Activated CD4-positive, alpha-beta T cell treated with anti-CD3 and anti-CD28 coated beads for 36 hours (primary cell): ENCODE measurements at regions of chr17 and their contacts with region 1.

Region 1: DNA sequence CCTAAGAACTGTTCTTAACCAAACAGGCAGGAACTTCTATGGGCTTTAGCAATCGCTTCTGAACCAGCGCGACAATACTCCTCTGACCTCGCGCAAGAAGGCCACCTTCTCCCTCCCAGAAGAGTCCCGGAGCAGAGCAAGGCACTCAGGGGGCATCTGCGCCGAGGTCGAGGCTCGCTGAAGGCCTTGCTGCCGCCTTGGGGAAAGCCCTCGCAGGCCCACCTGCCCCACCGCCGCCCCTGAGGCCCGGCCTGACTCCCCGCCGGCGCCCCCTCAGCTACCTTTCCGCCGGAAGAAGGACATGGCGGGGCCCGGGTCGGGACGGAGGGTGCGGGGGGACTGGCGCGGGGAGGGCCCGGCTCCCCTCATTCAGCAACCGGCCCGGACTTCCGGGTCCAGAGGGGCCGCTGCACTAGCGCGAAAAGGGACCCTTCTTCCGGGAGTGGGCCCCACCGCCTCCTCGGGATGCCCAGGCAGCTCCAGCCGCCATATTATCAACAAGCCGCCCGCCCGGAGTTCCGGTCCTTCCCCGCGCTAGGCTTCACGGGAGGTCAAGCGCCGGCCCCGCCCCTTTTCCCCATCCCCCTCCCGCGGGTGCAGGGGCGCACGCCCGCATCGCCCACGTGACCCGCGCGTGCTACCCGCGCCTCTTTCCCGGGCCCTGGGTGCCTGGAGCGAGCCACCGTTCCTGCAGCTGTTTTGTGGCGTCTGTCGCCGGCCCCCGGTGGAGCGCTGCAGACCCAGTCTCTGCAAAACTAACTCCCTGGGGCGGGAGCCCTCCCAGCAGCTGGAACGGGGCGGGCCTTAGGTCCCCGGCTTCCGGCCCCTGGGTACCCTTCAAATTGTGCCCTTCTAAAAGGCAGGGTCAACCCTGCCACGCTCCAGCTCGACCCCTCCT is at the start of gene AKAP10:
- DNase-seq: peak; percentile 98
- ATAC-seq: peak; percentile 85
- H3K4me3 Mint-ChIP-seq: peak within 1 kb of the TSS; percentile 90
- H3K27ac Mint-ChIP-seq: peak within 1 kb of the TSS; percentile 98
- H3K4me1 Mint-ChIP-seq: peaks cover 48% of the 10 kb centered on the region
- H3K27me3 Mint-ChIP-seq: no peaks in the 10 kb centered on the region
- total RNA-seq, gene AKAP10: 31.6 to 35.9 TPM

Region 2: DNA sequence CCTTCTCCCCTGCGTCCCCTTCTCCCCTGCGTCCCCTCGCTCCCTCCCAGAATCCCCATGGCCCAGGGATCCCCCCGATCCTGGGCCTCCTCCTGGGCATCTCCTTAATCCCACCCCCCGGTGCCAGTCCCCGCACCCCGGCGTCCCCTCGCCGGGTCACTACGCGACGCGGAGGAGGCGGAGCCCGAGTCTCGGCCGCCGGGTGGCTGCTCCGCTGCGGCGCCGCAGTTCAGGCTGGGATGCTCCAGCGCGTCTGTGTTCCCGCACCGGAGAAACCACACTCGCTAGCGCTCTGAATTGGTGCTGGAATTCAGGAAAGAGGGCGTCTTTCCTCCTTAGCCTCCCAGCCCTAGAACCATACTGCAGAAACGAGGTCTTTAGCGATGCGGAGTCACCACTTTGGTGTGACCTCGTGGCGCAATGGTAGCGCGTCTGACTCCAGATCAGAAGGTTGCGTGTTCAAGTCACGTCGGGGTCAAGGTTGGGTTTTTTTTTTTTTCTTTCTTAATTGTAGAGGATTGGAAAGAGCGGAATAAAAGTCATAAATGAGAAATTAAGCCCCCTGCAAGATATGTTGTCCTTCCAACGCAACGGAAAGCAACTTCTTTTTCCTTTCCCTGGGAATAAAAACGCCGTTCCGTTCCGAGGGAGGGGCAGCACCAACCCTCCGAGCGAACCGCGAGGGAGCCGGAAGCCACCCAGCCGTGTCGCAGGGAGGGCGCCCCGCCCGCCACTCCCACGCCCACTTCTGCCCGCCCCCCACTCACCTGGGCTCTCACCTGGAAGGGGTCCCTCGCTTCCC is 469.6 kb before region 1 on chr17:
- CTCF ChIA-PET with region 1: no interaction called
- POLR2A ChIA-PET with region 1: no interaction called
- intact Hi-C with region 1: loop called in 1 of 2 experiments (anchors 1 kb)
- DNase-seq: peak; percentile 87
- ATAC-seq: peak; percentile 85
- H3K4me3 Mint-ChIP-seq: peak overlapping the region; percentile 82
- H3K27ac Mint-ChIP-seq: peak overlapping the region; percentile 89
- H3K4me1 Mint-ChIP-seq: peaks cover 7% of the 10 kb centered on the region
- H3K27me3 Mint-ChIP-seq: peaks cover 2% of the 10 kb centered on the region

Region 3: GRCh38 chr17:19867064-19867313 is 110.6 kb before region 1 on chr17:
- CTCF ChIA-PET with region 1: no interaction called
- POLR2A ChIA-PET with region 1: interaction called, 9 read pairs
- intact Hi-C with region 1: loop called (anchors 1 to 5 kb)
- DNase-seq: peak; percentile 72
- ATAC-seq: peak; percentile 67
- H3K4me3 Mint-ChIP-seq: peak overlapping the region; percentile 80
- H3K27ac Mint-ChIP-seq: peak overlapping the region; percentile 65
- H3K4me1 Mint-ChIP-seq: peaks cover 21% of the 10 kb centered on the region
- H3K27me3 Mint-ChIP-seq: no peaks in the 10 kb centered on the region

Region 4: DNA sequence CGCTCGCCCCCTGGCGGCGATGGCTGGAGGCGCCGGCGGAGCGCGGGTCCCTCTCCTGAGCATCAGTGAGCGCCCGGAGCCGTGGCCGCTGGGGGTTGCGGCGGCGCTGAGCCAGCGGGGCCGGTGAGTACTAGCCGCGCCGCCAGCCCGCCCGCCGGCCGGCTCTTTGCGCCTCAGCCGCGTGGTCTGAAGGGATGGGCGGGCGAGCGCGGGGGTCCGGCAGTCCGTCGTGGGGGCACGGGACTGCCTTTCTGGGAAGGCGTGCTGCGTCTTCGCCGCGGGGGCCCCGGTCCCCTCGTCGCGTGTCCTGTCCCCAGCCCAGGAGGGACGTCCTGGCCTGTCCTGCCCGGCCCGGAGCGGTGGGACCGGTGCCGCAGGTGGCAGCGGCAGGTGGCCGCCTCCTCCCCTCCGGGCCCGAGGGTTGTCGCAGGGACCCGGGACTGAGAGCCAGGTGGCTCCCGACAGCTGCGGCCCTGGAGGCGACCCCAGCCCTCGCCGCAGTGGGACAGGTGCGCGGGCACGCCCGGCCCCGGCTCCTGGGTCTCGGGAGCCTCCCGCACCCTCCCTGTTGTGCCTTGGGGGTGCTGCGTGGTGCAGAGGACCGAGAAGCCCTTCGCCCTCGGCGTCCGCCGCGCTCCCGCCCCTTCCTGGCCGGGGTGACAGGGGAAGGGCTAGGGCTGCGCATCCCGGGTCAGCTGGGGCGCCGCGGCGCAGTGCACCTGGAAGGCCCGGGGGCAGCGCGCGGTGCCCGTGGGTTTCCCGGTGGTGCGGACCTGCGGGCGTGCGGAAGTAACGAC is 31.9 kb after region 1 on chr17 and contains the start of gene SPECC1:
- CTCF ChIA-PET with region 1: interaction called, 9 read pairs
- POLR2A ChIA-PET with region 1: no interaction called
- intact Hi-C with region 1: loop called (anchors 1 to 2 kb)
- DNase-seq: peak; percentile 92
- ATAC-seq: peak; percentile 99
- H3K4me3 Mint-ChIP-seq: peak within 1 kb of the TSS; percentile 77
- H3K27ac Mint-ChIP-seq: peak within 1 kb of the TSS; percentile 17
- H3K4me1 Mint-ChIP-seq: peaks cover 11% of the 10 kb centered on the region
- H3K27me3 Mint-ChIP-seq: peaks cover 37% of the 10 kb centered on the region
- total RNA-seq, gene SPECC1: 6.1 to 10.4 TPM

Region 5: GRCh38 chr17:20273741-20274500 is 296.4 kb after region 1 on chr17:
- CTCF ChIA-PET with region 1: no interaction called
- POLR2A ChIA-PET with region 1: no interaction called
- intact Hi-C with region 1: loop called in 1 of 2 experiments (anchors 5 kb)
- DNase-seq: peak; percentile 45
- ATAC-seq: peak; percentile 51
- H3K4me3 Mint-ChIP-seq: peak overlapping the region; percentile 6
- H3K27ac Mint-ChIP-seq: peak overlapping the region; percentile 84
- H3K4me1 Mint-ChIP-seq: peaks cover 91% of the 10 kb centered on the region
- H3K27me3 Mint-ChIP-seq: no peaks in the 10 kb centered on the region

Region 6: GRCh38 chr17:20284570-20285295 is 307.2 kb after region 1 on chr17:
- CTCF ChIA-PET with region 1: no interaction called
- POLR2A ChIA-PET with region 1: no interaction called
- intact Hi-C with region 1: no loop called
- DNase-seq: no peak
- ATAC-seq: no peak
- H3K4me3 Mint-ChIP-seq: no peak overlapping the region
- H3K27ac Mint-ChIP-seq: no peak overlapping the region
- H3K4me1 Mint-ChIP-seq: peaks cover 29% of the 10 kb centered on the region
- H3K27me3 Mint-ChIP-seq: no peaks in the 10 kb centered on the region